Sigmoid colon (tissue), 7 donors: ENCODE measurements at regions of chr1 and their contacts with region 1.

Region 1: DNA sequence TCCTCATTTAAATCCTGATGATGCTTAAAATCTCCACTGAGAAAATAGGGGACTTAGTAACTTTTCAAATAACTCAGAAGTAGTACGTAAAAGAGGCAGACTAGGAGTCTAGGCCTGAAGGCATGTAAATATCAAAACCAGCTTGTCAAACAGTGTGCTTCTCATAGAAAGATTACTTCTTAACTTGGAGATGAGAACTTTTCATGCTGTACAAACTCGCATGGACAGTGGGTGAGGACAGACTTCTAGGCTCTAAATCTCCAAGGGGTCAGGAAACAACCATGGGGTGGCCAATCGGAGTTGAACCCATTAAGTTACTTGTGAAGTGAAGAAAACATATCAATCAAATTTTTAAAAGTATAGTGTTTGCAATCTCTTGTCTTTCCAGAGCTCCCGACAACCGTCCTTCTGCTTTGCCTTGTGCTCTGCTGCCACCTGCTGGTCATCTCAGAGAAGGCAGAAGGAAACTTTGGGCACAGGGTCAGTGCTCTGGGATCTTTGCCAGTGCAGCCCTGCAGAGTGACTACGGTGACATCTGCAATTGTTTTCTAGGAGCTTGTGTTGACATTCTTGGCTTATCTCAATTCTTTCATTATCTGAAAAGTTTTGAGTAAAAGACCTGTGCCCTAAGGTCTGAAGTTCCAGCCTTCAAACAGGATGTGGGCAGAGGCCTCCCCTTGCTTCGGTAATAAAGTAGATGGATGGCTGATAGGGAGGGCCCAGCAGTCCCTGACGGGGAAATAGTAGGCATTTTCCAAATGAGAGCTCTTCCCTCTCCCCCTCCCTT is 105.1 kb upstream of the PDE4B start:
- DNase-seq: peak; percentile 90
- H3K4me3 ChIP-seq: no peak overlapping the region
- H3K27ac ChIP-seq: no peak overlapping the region
- H3K4me1 ChIP-seq: peaks cover 0 to 7% (median 5%) of the 10 kb centered on the region in 4 donors
- H3K27me3 ChIP-seq: no peaks in the 10 kb centered on the region
- CTCF ChIP-seq: peak; percentile 64 to 97 (median 90)
- EP300 ChIP-seq: no peak
- POLR2A ChIP-seq: no peak

Region 2: DNA sequence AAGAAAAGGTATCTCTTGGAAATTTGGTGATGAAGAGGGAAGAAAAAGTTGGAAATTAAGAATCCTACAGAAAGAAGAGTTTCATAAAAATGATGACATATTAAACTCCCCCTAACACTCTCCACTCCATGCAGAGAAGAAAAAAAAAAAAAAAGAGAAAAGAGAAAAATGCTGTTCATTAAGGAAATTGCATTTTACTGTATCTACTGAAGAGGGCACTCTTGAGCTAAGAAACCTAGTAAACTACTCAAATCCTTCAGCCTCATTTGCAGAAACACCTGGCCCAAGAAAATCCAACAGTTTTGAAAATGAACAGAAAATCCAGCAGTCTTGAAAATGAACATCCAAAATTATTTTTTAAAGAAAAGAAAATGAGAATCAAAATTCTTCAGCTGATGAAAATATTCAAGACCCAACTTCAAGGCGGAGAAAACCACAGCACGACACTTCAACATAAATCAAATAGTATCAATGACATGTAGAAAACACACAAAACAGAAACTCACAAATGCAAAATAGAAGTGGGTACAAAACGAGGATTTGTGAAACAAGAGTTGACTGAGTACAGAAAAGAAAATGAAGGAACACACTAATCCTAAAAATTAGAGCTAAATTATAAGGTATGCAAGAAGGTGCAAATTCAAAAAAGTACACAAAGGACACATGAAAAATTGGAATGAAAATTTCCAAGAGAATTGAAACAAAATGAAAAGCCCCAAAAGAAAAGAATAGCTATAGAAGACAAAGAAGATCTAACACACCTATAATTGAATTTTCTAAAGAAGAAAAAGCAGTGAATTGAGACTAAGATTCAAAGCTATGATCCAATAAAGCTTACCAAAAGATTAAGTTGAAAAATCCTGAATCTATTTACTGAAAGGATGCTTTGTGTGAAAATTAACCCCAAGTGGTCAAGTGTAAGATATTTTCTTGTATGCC is 451.5 kb before region 1 on chr1:
- intact Hi-C with region 1: loop called (anchors 5 kb)
- DNase-seq: no peak
- H3K4me3 ChIP-seq: no peak overlapping the region
- H3K27ac ChIP-seq: no peak overlapping the region
- H3K4me1 ChIP-seq: no peaks in the 10 kb centered on the region
- H3K27me3 ChIP-seq: no peaks in the 10 kb centered on the region
- CTCF ChIP-seq: peak in 2 of 4 experiments; percentile 12 to 15
- EP300 ChIP-seq: no peak
- POLR2A ChIP-seq: no peak

Region 3: DNA sequence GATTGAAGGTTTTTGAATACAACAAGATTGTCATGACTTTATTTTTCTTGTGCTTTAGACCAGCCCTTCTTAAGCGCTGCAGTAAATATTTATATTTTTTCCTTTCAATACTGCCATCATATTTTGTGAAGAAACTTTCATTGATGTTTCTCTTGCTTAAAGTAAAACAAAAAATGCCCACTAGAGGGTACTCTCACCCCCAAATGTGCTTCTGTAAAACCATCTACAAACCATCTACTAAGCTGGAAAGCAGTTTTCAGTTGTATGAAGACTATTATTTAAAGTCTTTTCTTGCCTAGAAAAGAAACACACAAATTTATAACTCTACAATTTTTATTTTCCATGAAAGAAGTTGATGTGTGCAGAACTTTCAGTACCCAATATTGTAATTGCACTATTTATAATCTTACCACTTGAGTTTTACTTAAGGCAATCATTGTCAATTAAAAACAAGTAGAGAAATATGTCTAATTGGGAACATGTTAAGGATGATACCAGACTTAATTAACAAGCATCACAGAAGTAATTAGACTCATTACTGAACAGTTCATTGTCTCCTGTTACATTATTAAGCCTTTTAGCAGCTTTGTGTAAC is 256.4 kb before region 1 on chr1:
- intact Hi-C with region 1: loop called (anchors 2 kb)
- DNase-seq: no peak
- H3K4me3 ChIP-seq: no peak overlapping the region
- H3K27ac ChIP-seq: peak overlapping the region in 1 of 4 donors; percentile 55
- H3K4me1 ChIP-seq: peaks cover 0 to 8% (median 6%) of the 10 kb centered on the region in 4 donors
- H3K27me3 ChIP-seq: no peaks in the 10 kb centered on the region
- CTCF ChIP-seq: peak in 2 of 4 experiments; percentile 30 to 39
- EP300 ChIP-seq: no peak
- POLR2A ChIP-seq: no peak

Region 4: DNA sequence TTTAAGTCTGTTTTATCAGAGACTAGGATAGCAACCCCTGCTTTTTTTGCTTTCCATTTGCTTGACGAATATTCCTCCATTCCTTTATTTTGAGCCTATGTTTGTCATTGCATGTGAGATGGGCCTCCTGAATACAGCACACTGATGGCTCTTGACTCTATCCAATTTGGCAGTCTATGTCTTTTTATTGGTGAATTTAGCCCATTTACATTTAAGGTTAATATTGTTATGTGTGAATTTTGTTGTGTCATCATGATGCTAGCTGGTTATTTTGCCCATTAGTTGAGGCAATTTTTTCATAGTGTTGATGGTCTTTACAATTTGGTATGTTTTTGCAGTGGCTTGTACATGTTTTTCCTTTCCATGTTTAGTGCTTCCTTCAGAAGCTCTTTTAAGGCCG is 54.4 kb after region 1 on chr1:
- intact Hi-C with region 1: no loop called
- DNase-seq: no peak
- H3K4me3 ChIP-seq: no peak overlapping the region
- H3K27ac ChIP-seq: no peak overlapping the region
- H3K4me1 ChIP-seq: no peaks in the 10 kb centered on the region
- H3K27me3 ChIP-seq: no peaks in the 10 kb centered on the region
- CTCF ChIP-seq: no peak
- EP300 ChIP-seq: no peak
- POLR2A ChIP-seq: no peak